ENCODE measurements at regions of chr3 and their contacts with region 1.

Region 1: DNA sequence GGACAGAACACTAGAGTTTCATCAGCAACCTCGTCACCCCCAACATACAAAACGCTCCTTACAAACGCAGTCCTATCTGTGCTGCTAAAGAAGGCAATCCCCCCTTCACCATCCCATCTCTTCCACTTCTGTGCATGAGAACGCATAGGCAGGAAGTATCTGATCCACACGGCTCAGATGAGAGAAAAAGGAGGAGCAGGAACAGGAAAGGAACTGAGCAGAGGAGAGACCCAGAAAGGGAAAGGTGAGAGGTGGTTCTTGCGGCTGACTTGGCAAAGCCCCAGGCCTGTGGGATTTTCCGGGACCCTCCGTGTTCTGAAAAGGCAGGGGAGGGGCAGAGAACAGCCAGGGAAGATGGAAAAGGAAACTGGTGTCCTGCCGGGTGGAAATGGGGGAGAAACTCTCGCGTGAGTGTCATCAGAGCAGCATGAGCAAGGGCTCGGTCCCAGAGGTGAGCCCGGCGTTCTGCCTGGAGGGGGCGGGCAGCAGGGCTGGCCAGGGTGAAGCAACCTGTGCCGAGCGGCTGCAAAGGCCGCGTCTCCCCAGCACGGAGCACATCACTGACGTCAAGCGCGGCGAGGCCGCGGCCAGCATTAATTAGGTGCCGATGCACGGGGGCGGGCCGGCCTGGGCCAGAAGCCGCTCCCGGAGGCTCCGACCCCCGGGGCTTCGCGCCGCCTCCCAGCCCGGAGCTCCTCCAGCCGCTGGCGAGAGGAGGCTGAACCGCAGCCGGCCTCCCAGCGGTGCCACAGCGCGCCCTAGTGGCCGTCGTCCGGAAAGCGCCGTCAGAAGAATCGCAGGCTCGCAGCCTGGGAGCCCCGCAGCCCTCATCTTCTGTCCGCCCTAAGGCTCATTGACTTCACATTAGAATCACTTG is 35.8 kb downstream of the CPN2 start:
- DNase-seq: peak; percentile 95
- H3K4me3 Mint-ChIP-seq: peak overlapping the region; percentile 82
- H3K27ac Mint-ChIP-seq: peak overlapping the region; percentile 84
- H3K4me1 Mint-ChIP-seq: peaks cover 6% of the 10 kb centered on the region
- H3K27me3 Mint-ChIP-seq: no peaks in the 10 kb centered on the region
- CTCF ChIP-seq: peak; percentile 92

Region 2: DNA sequence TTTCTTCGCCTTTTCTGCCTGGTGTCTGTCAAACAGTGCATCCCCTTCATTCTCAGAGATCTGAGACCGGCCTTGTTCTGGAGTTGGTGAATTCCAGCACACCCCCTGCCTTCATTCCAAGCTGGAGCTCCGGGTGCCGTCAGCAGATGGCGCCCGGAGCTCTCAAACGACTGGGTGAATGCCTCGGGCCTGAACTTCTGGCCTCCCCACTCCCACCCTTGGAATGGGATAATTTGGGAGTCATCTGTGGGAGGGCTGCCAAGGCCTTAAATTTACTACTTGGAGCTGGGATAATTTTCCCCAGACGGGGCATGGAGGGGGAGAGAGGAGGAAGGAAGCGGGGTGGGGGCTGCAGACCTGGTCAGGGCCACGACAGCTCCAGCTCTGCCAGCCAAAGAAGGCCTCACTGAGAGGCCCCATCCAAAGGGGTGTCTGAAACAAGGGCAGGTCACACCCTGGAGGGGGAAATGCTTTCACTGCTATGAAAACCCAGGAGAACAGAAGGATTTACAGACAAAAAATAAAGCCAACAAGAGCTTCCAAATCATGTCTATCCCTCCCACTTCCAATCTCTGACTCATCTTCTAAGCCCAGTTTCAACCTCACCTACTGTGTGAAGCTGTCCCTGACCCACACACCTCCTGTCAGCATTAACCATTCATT is 534.4 kb before region 1 on chr3:
- CTCF ChIA-PET with region 1: interaction called, 107 read pairs
- POLR2A ChIA-PET with region 1: interaction called, 55 read pairs
- intact Hi-C with region 1: loop called (anchors 1 kb)
- DNase-seq: peak; percentile 93
- H3K4me3 Mint-ChIP-seq: no peak overlapping the region
- H3K27ac Mint-ChIP-seq: peak overlapping the region; percentile 88
- H3K4me1 Mint-ChIP-seq: peaks cover 35% of the 10 kb centered on the region
- H3K27me3 Mint-ChIP-seq: peaks cover 10% of the 10 kb centered on the region
- CTCF ChIP-seq: peak; percentile 93

Region 3: GRCh38 chr3:193837347-193837827 is 477.9 kb before region 1 on chr3:
- CTCF ChIA-PET with region 1: interaction called, 5 read pairs
- POLR2A ChIA-PET with region 1: interaction called, 3 read pairs
- intact Hi-C with region 1: loop called (anchors 2 kb)
- DNase-seq: peak; percentile 92
- H3K4me3 Mint-ChIP-seq: peak overlapping the region; percentile 61
- H3K27ac Mint-ChIP-seq: no peak overlapping the region
- H3K4me1 Mint-ChIP-seq: peaks cover 34% of the 10 kb centered on the region
- H3K27me3 Mint-ChIP-seq: no peaks in the 10 kb centered on the region
- CTCF ChIP-seq: no peak

Region 4: DNA sequence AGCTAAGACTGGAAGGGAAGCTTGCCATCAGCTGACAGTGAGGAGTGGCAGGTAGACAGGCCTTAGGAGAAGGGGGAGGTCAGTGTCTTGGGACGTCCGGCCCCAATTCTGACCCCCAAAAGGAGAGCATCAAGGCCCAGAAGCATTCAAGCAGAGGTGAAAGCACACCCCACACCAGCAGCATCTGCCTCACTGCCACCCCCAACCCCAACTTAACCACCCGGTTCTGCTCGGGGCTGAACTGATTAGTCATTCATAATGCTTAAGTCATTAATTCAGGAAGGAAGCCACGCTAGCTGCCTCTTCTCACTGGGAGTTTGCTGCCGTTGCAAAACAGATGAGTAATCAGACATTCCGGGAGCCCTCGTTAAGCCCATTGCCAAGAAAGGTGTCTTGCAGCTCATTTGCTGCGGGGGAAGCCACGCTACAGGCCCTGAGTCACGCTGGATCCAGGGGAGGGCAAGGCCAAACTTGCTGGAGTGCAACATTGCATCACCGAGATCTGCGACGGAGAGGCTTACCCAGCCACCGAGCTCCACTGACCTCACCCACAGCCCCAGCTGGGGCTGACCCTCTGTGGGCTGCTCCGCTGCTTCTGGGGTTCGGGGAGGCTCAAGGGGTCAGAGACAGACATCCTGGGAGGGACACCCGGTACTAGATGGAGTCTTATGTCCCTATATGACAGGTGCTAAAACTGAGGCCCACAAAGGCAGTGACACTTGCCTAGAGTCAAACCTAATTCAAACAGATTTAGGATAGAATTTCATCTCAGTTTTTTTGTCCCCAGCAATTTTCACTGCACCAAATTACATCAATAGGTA is 225.8 kb before region 1 on chr3:
- CTCF ChIA-PET with region 1: interaction called, 4 read pairs
- POLR2A ChIA-PET with region 1: interaction called, 4 read pairs
- intact Hi-C with region 1: loop called (anchors 5 kb)
- DNase-seq: peak; percentile 100
- H3K4me3 Mint-ChIP-seq: peak overlapping the region; percentile 57
- H3K27ac Mint-ChIP-seq: peak overlapping the region; percentile 89
- H3K4me1 Mint-ChIP-seq: peaks cover 25% of the 10 kb centered on the region
- H3K27me3 Mint-ChIP-seq: no peaks in the 10 kb centered on the region
- CTCF ChIP-seq: no peak

Region 5: DNA sequence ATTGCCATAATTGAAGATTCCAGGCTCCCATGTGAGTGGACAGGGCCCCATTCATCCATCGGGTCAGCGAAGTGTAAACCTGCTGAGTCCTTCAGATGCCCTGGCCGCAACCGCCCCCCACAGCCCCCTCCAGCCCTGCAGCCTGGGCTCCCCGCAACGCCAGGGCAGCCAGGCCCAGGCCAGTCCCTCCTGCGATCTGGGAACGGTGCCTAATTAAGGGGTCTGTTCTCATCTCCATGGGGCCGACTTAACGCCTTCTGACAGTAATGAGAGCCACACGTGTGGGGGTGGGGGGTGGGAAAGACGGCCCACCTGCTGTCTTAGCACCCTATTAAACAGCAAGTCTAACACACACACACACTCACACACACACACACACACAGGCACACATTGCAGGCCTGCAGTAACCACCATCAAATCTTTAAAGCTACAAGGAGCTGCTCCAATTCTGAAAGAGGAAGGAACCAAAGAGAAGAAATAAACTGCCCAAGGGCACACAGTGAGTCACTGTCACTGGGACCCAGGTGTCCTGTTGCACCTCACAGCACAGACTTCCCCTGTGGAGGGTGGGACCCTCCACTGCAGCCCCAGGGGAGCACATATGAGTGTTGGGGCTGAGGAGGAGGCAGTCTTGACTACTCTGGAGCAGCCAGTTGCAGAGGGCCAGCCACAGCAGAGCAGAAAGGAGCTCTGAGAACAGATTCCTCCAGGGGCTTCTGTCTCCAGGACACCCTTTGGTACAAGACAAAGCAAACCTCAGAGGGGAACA is 211.2 kb before region 1 on chr3:
- CTCF ChIA-PET with region 1: no interaction called
- POLR2A ChIA-PET with region 1: no interaction called
- intact Hi-C with region 1: no loop called
- DNase-seq: no peak
- H3K4me3 Mint-ChIP-seq: no peak overlapping the region
- H3K27ac Mint-ChIP-seq: no peak overlapping the region
- H3K4me1 Mint-ChIP-seq: peaks cover 5% of the 10 kb centered on the region
- H3K27me3 Mint-ChIP-seq: peaks cover 11% of the 10 kb centered on the region
- CTCF ChIP-seq: no peak

Region 6: DNA sequence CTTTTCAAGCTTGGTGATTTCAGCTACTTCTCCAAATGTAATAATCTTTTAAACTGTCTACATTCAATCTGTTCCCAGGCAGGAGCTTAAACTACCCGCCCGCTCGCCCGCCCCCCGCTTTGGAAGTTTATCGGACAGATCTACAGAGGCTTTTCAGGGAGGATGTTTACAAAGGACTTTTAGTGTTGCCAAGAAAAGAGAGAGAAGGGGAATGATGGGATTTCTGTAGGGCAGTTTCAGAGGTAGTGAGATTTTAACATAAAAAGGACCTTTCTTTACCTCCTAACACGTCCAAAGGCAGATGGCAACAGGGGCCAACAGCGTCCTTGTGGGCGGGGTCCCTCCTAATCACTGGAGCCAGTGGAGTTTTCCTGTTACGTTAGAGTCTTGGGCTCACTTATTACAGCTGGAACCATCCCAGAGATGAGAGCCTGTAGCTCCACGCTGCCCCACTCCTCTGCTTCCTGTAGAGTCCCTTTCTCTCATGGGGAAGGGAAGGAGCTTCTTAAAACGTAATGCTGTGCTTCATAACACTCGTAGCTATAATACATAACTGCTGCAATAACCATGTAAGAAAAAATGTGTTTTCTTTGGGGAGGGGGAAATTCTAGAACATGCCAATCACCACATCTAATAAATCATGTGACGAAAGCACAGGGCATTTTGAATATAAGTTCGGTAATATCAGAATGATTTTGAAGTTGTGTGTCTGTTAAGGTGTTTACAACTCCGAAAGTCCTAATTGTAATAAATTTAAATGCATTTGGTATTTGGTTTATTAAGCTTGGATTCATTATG is 148.4 kb before region 1 on chr3:
- CTCF ChIA-PET with region 1: interaction called, 15 read pairs
- POLR2A ChIA-PET with region 1: interaction called, 5 read pairs
- intact Hi-C with region 1: loop called (anchors 1 kb)
- DNase-seq: no peak
- H3K4me3 Mint-ChIP-seq: no peak overlapping the region
- H3K27ac Mint-ChIP-seq: no peak overlapping the region
- H3K4me1 Mint-ChIP-seq: no peaks in the 10 kb centered on the region
- H3K27me3 Mint-ChIP-seq: peaks cover 30% of the 10 kb centered on the region
- CTCF ChIP-seq: no peak

Region 7: DNA sequence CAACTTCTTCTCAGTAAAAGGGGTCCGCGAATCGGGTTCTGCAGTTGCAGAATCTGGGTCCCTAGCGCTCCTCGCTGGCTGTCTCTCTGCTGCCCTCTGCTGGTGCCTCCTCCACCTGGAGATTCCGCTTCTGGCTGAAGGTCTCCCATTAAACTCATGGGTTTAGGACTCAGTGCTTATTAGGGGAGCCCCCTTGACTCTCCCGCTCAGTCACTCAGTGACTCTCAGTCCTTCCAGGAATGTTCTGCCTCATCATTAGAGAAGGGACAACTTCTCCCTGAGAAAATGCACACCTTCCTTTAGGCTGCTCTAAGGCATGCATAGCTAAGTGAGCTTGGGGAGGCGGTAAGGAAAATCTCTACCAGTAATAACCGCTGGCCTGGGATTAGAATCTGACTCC is 28.7 kb after region 1 on chr3:
- CTCF ChIA-PET with region 1: interaction called, 112 read pairs
- POLR2A ChIA-PET with region 1: interaction called, 3 read pairs
- intact Hi-C with region 1: no loop called
- DNase-seq: peak; percentile 70
- H3K4me3 Mint-ChIP-seq: no peak overlapping the region
- H3K27ac Mint-ChIP-seq: no peak overlapping the region
- H3K4me1 Mint-ChIP-seq: no peaks in the 10 kb centered on the region
- H3K27me3 Mint-ChIP-seq: no peaks in the 10 kb centered on the region
- CTCF ChIP-seq: peak; percentile 88

Region 8: GRCh38 chr3:194623449-194624290 is 308.3 kb after region 1 on chr3:
- CTCF ChIA-PET with region 1: no interaction called
- POLR2A ChIA-PET with region 1: no interaction called
- intact Hi-C with region 1: no loop called
- DNase-seq: no peak
- H3K4me3 Mint-ChIP-seq: no peak overlapping the region
- H3K27ac Mint-ChIP-seq: no peak overlapping the region
- H3K4me1 Mint-ChIP-seq: no peaks in the 10 kb centered on the region
- H3K27me3 Mint-ChIP-seq: no peaks in the 10 kb centered on the region
- CTCF ChIP-seq: no peak

Measured in MCF 10A (cell line).